PC-3 (cell line): ENCODE measurements at regions of chr1 and their contacts with region 1.

Region 1: DNA sequence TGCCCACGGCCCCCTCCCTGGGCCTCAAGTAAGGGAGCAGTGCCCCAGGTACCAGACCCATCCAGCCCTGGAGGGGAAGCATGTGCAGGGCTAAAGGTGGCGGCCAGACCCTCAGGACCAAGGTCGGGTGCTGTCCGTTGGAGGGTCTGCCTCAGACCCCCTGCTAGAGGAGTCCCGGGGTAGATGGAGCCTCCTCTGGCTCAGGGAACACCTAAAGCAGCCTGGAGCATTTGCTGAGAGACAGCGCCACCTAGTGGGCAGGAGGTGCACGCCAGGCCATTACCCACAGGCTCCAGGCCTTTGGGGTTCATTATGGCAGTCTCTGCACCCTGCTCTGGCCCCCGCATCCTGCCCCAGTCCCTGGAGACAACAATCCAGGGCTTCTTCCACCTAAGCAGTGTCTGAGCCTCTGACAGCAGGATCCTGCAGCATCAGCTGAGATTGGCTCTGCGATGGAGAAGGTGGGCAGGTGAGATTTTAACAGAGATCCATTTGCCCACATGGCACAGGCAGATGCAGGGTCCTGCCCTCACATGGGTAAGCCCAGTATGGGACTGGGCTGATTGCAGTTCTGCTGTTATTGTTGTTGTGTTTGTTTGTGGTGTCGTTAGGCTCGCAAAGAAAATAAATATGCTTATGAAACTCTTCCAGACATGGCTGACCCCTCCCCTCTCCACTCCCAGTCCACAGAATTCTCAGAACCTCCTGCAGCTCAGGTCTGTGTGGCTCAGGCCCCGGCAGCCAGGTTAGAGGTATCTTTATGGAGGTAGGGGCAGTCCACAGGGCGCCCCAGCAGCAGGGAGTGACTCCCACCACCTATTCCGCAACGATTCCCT is 42.4 kb downstream of the CTNNBIP1 start:
- DNase-seq: peak; percentile 77
- ATAC-seq: peak; percentile 95
- H3K4me3 ChIP-seq: no peak overlapping the region
- H3K27ac ChIP-seq: no peak overlapping the region
- H3K4me1 ChIP-seq: peaks cover 5% of the 10 kb centered on the region
- H3K27me3 ChIP-seq: no peaks in the 10 kb centered on the region
- CTCF ChIP-seq: peak; percentile 95

Region 2: GRCh38 chr1:9724706-9725476 is 142.7 kb before region 1 on chr1:
- CTCF ChIA-PET with region 1: no interaction called
- POLR2A ChIA-PET with region 1: no interaction called
- intact Hi-C with region 1: loop called (anchors 2 kb)
- DNase-seq: peak; percentile 74
- ATAC-seq: peak; percentile 93
- H3K4me3 ChIP-seq: no peak overlapping the region
- H3K27ac ChIP-seq: no peak overlapping the region
- H3K4me1 ChIP-seq: no peaks in the 10 kb centered on the region
- H3K27me3 ChIP-seq: no peaks in the 10 kb centered on the region
- CTCF ChIP-seq: peak; percentile 89